Cardiac septum (tissue), 1 donor: ENCODE measurements at regions of chr18 and their contacts with region 1.

Region 1: GRCh38 chr18:32092422-32093101 is 888 bp downstream of the RNF138 start:
- DNase-seq: peak; percentile 100

Region 2: GRCh38 chr18:31942999-31943865 is 149.3 kb before region 1 on chr18 and contains the start of gene TRAPPC8:
- intact Hi-C with region 1: loop called (anchors 5 kb)
- DNase-seq: peak; percentile 100
- total RNA-seq, gene TRAPPC8: 30.1 TPM

Region 3: DNA sequence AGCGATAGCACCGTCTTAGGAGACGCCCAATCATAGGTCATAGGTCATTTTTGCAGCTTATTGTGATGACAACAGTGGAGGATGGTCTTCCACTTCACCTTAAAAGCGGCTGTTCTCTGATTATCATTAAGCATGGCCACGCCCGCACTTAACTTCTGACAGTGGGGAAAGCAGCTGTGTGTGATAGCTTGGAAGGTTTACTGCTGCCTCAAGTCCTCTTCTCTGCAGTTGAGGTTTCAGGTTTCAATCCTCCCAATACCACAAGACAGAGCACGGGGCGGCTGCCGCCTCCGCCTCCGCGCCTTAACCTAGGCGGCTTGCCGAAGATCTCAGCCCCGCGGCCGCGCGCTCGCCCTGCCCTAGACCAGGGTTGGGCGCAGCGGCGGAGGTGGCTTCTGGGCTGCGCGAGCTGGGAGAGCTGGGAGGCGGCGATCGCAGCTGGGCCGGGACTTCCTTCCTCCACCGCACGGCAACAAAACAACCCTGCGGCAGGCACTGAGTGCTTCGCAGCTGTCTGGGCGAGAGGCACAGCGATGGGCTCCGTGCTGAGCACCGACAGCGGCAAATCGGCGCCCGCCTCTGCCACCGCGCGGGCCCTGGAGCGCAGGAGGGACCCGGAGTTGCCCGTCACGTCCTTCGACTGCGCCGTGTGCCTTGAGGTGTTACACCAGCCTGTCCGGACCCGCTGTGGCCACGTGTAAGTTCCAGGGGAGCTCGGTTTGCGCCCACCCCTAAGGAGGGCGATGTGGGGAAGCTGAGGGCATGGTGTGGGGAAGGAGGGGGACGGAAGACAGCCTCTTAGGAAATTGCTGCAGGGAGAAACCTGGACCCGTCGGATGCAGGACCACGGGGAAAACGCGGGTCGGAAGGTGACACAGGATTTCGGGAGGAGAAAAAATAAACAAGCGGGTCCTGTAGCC is 74.0 kb before region 1 on chr18 and contains the start of gene RNF125:
- intact Hi-C with region 1: loop called (anchors 2 kb)
- DNase-seq: peak; percentile 94
- total RNA-seq, gene RNF125: 1.5 TPM

Region 4: DNA sequence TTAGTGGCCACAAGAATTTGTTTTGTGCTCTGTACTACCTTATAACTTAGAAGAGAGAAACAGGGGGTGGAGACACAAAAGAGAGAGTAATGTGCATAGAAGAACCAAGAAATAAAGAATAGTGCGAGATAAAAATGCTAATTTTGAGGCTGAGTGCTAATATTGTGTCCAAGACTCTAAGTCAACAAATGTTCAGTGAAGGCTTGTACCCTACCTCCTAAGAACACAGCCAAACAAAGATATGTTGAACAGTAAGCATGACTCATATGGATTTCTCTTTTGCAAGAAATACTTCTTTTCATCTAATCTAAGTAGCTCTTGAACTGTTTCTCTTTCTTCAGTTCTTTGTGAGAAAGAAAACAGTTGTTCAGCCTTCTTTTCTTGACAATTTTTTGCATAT is 332.9 kb after region 1 on chr18:
- intact Hi-C with region 1: loop called (anchors 10 kb)
- DNase-seq: no peak